Adrenal gland (tissue), 19 donors: ENCODE measurements at regions of chr9 and their contacts with region 1.

Region 1: GRCh38 chr9:34899535-34900158 is 58.4 kb upstream of the PHF24 start:
- DNase-seq: peak; percentile 71 to 95 (median 82)
- H3K4me3 ChIP-seq: no peak overlapping the region
- H3K27ac ChIP-seq: no peak overlapping the region
- H3K4me1 ChIP-seq: no peaks in the 10 kb centered on the region
- H3K27me3 ChIP-seq: peaks cover 8% of the 10 kb centered on the region
- CTCF ChIP-seq: peak; percentile 67 to 91 (median 88)
- POLR2A ChIP-seq: no peak

Region 2: DNA sequence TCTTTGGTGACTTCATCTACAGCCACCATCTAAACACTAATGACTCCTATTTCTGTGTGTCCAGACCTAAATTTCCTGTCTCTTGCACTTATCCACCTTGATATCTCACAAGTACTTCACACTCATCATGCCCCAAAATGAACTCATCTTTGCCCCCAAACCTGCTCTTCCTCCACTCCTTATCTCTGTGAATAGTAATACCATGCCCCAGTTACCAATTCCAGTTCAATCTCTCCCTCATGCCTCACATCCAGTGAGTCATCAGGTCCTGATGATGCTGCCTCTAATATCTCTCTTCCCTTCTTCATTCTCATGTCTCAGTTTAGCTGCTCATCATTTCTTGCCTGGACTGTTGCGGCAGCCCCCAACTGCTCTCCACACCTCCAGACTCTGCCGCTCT is 75.0 kb after region 1 on chr9:
- intact Hi-C with region 1: loop called in 1 of 2 experiments (anchors 5 kb)
- DNase-seq: no peak
- H3K4me3 ChIP-seq: no peak overlapping the region
- H3K27ac ChIP-seq: no peak overlapping the region
- H3K4me1 ChIP-seq: no peaks in the 10 kb centered on the region
- H3K27me3 ChIP-seq: no peaks in the 10 kb centered on the region
- CTCF ChIP-seq: no peak
- POLR2A ChIP-seq: no peak

Region 3: DNA sequence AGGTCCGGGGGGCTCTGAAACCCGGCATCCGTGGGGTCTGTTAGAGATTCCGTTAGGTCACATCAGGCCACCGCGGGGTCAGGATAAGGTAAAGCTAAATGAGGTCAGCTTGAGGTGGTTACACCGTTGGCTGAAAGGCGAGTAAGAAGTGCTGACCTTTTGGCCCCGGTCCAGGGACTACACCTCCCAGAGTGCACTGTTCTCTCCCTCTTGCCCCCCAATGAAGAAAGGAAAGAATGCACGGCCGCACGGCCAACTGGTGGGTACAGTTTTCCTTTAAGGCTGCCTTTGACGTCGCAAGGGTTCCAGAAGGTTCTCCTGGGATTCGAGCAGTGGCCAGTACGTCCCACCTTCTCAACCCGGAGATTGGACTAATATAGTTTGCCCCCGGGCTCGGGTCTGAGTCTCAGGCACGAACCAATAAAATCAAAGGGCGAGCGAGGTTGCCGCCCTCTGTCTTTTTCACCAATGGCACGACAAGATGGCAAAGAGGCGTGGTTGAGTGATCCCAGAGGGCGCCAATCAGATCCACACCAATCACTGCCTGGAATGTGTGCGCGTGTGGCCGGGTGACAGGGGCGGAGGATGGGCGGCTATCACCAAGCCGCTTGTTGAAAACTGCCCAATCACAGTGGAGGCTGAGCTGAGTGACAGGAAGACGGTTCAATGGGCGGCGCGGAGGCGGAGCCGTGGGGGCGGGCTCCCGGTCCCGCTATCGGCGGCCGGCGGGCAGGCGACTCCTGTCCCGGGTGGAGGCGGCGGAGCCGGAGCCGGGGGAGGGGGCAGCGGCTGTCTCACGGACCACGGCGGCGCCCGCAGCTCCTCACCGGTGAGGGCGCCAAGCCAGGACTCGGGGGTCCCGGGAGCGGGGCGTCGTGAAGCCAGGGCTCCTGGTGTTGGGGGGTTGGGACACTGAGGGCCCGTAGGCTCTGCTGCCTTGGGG is 89.6 kb after region 1 on chr9 and contains the start of gene DNAJB5:
- intact Hi-C with region 1: loop called in 1 of 2 experiments (anchors 5 kb)
- DNase-seq: peak; percentile 99 to 100 (median 100)
- H3K4me3 ChIP-seq: peak within 1 kb of the TSS in 3 of 4 donors; percentile 63 to 88 (median 71)
- H3K27ac ChIP-seq: peak within 1 kb of the TSS in 4 of 5 donors; percentile 86 to 95 (median 91)
- H3K4me1 ChIP-seq: peaks cover 29 to 40% of the 10 kb centered on the region in 2 donors
- H3K27me3 ChIP-seq: no peaks in the 10 kb centered on the region
- CTCF ChIP-seq: peak in 1 of 6 experiments; percentile 4
- POLR2A ChIP-seq: peak; percentile 93 to 95
- total RNA-seq, gene DNAJB5: 6.2 to 22.4 (median 13.3) TPM

Region 4: GRCh38 chr9:35096035-35096849 is 196.6 kb after region 1 on chr9 and contains the start of gene PIGO:
- intact Hi-C with region 1: loop called (anchors 5 kb)
- DNase-seq: peak; percentile 87 to 94 (median 92)
- H3K4me3 ChIP-seq: peak within 1 kb of the TSS; percentile 47 to 97 (median 91)
- H3K27ac ChIP-seq: peak within 1 kb of the TSS; percentile 92 to 99 (median 97)
- H3K4me1 ChIP-seq: peaks cover 7 to 10% of the 10 kb centered on the region in 2 donors
- H3K27me3 ChIP-seq: no peaks in the 10 kb centered on the region
- CTCF ChIP-seq: peak; percentile 47 to 91 (median 82)
- POLR2A ChIP-seq: peak; percentile 67 to 71
- total RNA-seq, gene PIGO: 19.7 to 37.4 (median 32.1) TPM

Region 5: DNA sequence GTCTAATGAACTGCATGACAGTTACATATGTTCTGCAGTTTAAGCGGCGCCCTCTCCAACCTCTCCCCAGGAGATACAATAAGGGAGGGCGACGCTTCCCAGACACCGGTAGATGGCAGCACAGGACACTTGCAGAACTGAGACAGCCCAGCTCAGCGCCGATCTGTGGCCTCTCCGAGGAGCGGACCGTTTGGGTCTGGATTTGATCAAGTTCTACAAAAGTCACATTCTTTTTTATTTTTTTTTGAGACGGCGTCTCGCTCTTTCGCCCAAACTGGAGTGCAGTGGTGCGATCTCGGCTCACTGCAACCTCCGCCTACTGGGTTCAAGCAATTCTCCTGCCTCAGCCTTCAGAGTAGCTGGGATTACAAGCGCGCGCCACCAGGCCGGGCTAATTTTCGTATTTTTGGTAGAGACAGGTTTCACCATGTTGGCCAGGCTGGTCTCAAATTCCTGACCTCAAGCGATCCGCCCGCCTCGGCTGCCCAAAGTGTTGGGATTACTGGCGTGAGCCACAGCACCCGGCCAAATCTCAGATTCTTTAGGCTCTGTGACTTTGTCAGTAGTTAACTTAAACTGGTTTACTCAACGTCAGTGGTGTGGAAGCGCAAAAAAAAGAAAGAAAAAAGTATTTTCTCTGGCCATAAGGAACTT is 217.4 kb after region 1 on chr9:
- intact Hi-C with region 1: no loop called
- DNase-seq: peak; percentile 91 to 97 (median 96)
- H3K4me3 ChIP-seq: peak overlapping the region in 1 of 4 donors; percentile 52
- H3K27ac ChIP-seq: peak overlapping the region in 4 of 5 donors; percentile 75 to 83 (median 76)
- H3K4me1 ChIP-seq: peaks cover 26 to 43% of the 10 kb centered on the region in 2 donors
- H3K27me3 ChIP-seq: no peaks in the 10 kb centered on the region
- CTCF ChIP-seq: peak; percentile 91 to 97 (median 96)
- POLR2A ChIP-seq: no peak